B cell (primary cell): ENCODE measurements at regions of chr22 and their contacts with region 1.

Region 1: GRCh38 chr22:26364066-26365015 is 64.7 kb upstream of the ASPHD2 start:
- DNase-seq: peak; percentile 77
- ATAC-seq: peak; percentile 78
- H3K4me3 ChIP-seq: no peak overlapping the region
- H3K4me3 Mint-ChIP-seq: no peak overlapping the region
- H3K27ac ChIP-seq: no peak overlapping the region
- H3K27ac Mint-ChIP-seq: no peak overlapping the region
- H3K4me1 ChIP-seq: peaks cover 4 to 7% of the 10 kb centered on the region in 2 donors
- H3K4me1 Mint-ChIP-seq: peaks cover 3% of the 10 kb centered on the region
- H3K27me3 ChIP-seq: peaks cover 0 to 18% (median 4%) of the 10 kb centered on the region in 4 experiments
- H3K27me3 Mint-ChIP-seq: peaks cover 24% of the 10 kb centered on the region
- CTCF ChIP-seq: peak; percentile 71

Region 2: GRCh38 chr22:25777870-25778269 is 586.5 kb before region 1 on chr22:
- CTCF ChIA-PET with region 1: no interaction called
- POLR2A ChIA-PET with region 1: no interaction called
- intact Hi-C with region 1: loop called (anchors 10 kb)
- DNase-seq: no peak
- ATAC-seq: no peak
- H3K4me3 ChIP-seq: no peak overlapping the region
- H3K4me3 Mint-ChIP-seq: no peak overlapping the region
- H3K27ac ChIP-seq: no peak overlapping the region
- H3K27ac Mint-ChIP-seq: no peak overlapping the region
- H3K4me1 ChIP-seq: peaks cover under 1 to 3% of the 10 kb centered on the region in 2 donors
- H3K4me1 Mint-ChIP-seq: peaks cover 2% of the 10 kb centered on the region
- H3K27me3 ChIP-seq: no peaks in the 10 kb centered on the region
- H3K27me3 Mint-ChIP-seq: peaks cover 13% of the 10 kb centered on the region
- CTCF ChIP-seq: no peak

Region 3: GRCh38 chr22:26377170-26377830 is 13.0 kb after region 1 on chr22:
- CTCF ChIA-PET with region 1: interaction called, 20 read pairs
- POLR2A ChIA-PET with region 1: no interaction called
- intact Hi-C with region 1: no loop called
- DNase-seq: peak; percentile 24
- ATAC-seq: no peak
- H3K4me3 ChIP-seq: no peak overlapping the region
- H3K4me3 Mint-ChIP-seq: no peak overlapping the region
- H3K27ac ChIP-seq: no peak overlapping the region
- H3K27ac Mint-ChIP-seq: no peak overlapping the region
- H3K4me1 ChIP-seq: no peaks in the 10 kb centered on the region
- H3K4me1 Mint-ChIP-seq: peaks cover 4% of the 10 kb centered on the region
- H3K27me3 ChIP-seq: peaks cover 0 to 32% (median 19%) of the 10 kb centered on the region in 4 experiments
- H3K27me3 Mint-ChIP-seq: peaks cover 74% of the 10 kb centered on the region
- CTCF ChIP-seq: no peak

Region 4: DNA sequence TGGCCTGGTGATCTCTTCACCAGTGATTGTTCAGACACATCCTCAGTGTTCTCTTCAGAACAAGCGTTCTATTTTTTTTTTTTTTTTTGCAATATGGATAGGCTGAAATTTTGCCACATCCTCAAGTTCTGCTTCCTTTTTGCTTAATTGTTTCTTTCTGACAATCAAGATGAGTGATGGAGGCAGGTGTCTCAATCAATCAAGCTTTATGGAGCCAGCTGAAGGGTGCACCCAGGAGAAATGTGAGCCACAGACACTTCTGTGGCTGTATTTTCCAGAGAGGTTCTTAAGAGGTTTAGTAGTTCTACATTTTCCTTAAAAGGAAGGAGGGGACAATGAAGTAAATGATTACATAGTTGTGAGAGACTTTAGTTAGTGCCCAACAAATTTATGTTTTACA is 20.8 kb after region 1 on chr22:
- CTCF ChIA-PET with region 1: interaction called, 12 read pairs
- POLR2A ChIA-PET with region 1: no interaction called
- intact Hi-C with region 1: no loop called
- DNase-seq: no peak
- ATAC-seq: no peak
- H3K4me3 ChIP-seq: no peak overlapping the region
- H3K4me3 Mint-ChIP-seq: no peak overlapping the region
- H3K27ac ChIP-seq: no peak overlapping the region
- H3K27ac Mint-ChIP-seq: no peak overlapping the region
- H3K4me1 ChIP-seq: no peaks in the 10 kb centered on the region
- H3K4me1 Mint-ChIP-seq: no peaks in the 10 kb centered on the region
- H3K27me3 ChIP-seq: peaks cover 0 to 12% (median 8%) of the 10 kb centered on the region in 4 experiments
- H3K27me3 Mint-ChIP-seq: peaks cover 33% of the 10 kb centered on the region
- CTCF ChIP-seq: no peak

Region 5: GRCh38 chr22:26542831-26543230 is 178.5 kb after region 1 on chr22:
- CTCF ChIA-PET with region 1: no interaction called
- POLR2A ChIA-PET with region 1: no interaction called
- intact Hi-C with region 1: no loop called
- DNase-seq: peak; percentile 27
- ATAC-seq: peak; percentile 21
- H3K4me3 ChIP-seq: no peak overlapping the region
- H3K4me3 Mint-ChIP-seq: no peak overlapping the region
- H3K27ac ChIP-seq: peak overlapping the region; percentile 1 to 14
- H3K27ac Mint-ChIP-seq: peak overlapping the region; percentile 78
- H3K4me1 ChIP-seq: peaks cover 6 to 26% of the 10 kb centered on the region in 2 donors
- H3K4me1 Mint-ChIP-seq: peaks cover 29% of the 10 kb centered on the region
- H3K27me3 ChIP-seq: no peaks in the 10 kb centered on the region
- H3K27me3 Mint-ChIP-seq: no peaks in the 10 kb centered on the region
- CTCF ChIP-seq: no peak

Region 6: DNA sequence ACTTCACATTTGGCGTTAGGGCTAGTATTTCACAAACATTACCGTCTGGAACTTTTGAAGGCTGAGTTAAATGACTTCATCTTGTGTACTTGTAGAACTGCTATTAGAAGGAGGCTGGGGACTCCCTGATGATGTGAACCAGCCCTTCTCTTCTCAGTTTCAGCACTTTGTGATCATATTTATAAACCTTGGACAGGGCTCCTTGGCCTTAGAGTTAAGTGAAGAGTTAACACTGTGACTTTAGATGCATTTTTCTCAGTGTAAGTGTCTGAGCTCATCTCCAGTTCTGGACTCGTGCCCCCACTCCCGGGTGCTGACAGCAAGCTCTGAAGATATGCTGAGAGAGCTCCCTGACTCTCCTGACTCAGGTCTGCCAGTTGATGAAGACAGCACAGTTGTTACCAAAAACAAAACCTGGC is 301.5 kb after region 1 on chr22:
- CTCF ChIA-PET with region 1: interaction called, 7 read pairs
- POLR2A ChIA-PET with region 1: no interaction called
- intact Hi-C with region 1: loop called (anchors 1 kb)
- DNase-seq: no peak
- ATAC-seq: no peak
- H3K4me3 ChIP-seq: no peak overlapping the region
- H3K4me3 Mint-ChIP-seq: peak overlapping the region; percentile 50
- H3K27ac ChIP-seq: no peak overlapping the region
- H3K27ac Mint-ChIP-seq: peak overlapping the region; percentile 27
- H3K4me1 ChIP-seq: peaks cover 33 to 64% of the 10 kb centered on the region in 2 donors
- H3K4me1 Mint-ChIP-seq: peaks cover 66% of the 10 kb centered on the region
- H3K27me3 ChIP-seq: no peaks in the 10 kb centered on the region
- H3K27me3 Mint-ChIP-seq: no peaks in the 10 kb centered on the region
- CTCF ChIP-seq: peak; percentile 19